ENCODE measurements at regions of chr22 and their contacts with region 1.

Region 1: GRCh38 chr22:49930739-49931412 is 12.4 kb downstream of the CRELD2 start:
- DNase-seq: peak; percentile 53
- ATAC-seq: peak; percentile 46
- H3K4me3 Mint-ChIP-seq: peak overlapping the region; percentile 55
- H3K27ac Mint-ChIP-seq: peak overlapping the region; percentile 79
- H3K4me1 Mint-ChIP-seq: peaks cover 56% of the 10 kb centered on the region
- H3K27me3 Mint-ChIP-seq: no peaks in the 10 kb centered on the region
- CTCF ChIP-seq: peak; percentile 21

Region 2: GRCh38 chr22:49657275-49657975 is 273.5 kb before region 1 on chr22:
- CTCF ChIA-PET with region 1: no interaction called
- POLR2A ChIA-PET with region 1: no interaction called
- intact Hi-C with region 1: loop called (anchors 10 kb)
- DNase-seq: peak; percentile 63
- ATAC-seq: peak; percentile 80
- H3K4me3 Mint-ChIP-seq: peak overlapping the region; percentile 96
- H3K27ac Mint-ChIP-seq: peak overlapping the region; percentile 90
- H3K4me1 Mint-ChIP-seq: peaks cover 47% of the 10 kb centered on the region
- H3K27me3 Mint-ChIP-seq: no peaks in the 10 kb centered on the region
- CTCF ChIP-seq: no peak

Region 3: DNA sequence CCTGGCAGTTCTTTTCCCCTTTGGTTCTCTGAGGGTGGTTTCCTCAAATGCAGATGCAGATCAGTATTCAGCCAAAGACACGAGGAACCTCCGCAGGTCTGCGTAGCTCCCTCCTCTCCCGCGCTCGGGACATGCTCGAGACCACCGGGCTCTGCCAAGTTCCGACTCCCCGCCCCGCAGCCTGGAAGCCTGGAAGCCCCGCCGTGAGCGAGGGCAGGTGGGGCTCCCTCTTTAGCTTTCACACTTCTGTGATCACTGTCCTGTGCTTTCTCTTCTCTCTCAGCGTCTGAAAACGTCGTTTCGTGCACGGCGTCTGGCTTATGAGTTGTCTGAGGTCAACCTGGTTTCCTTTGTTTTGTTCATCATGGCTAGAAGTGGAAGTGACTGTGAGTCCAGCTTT is 50.6 kb before region 1 on chr22:
- CTCF ChIA-PET with region 1: no interaction called
- POLR2A ChIA-PET with region 1: no interaction called
- intact Hi-C with region 1: no loop called
- DNase-seq: no peak
- ATAC-seq: no peak
- H3K4me3 Mint-ChIP-seq: no peak overlapping the region
- H3K27ac Mint-ChIP-seq: no peak overlapping the region
- H3K4me1 Mint-ChIP-seq: peaks cover 16% of the 10 kb centered on the region
- H3K27me3 Mint-ChIP-seq: no peaks in the 10 kb centered on the region
- CTCF ChIP-seq: no peak

Region 4: DNA sequence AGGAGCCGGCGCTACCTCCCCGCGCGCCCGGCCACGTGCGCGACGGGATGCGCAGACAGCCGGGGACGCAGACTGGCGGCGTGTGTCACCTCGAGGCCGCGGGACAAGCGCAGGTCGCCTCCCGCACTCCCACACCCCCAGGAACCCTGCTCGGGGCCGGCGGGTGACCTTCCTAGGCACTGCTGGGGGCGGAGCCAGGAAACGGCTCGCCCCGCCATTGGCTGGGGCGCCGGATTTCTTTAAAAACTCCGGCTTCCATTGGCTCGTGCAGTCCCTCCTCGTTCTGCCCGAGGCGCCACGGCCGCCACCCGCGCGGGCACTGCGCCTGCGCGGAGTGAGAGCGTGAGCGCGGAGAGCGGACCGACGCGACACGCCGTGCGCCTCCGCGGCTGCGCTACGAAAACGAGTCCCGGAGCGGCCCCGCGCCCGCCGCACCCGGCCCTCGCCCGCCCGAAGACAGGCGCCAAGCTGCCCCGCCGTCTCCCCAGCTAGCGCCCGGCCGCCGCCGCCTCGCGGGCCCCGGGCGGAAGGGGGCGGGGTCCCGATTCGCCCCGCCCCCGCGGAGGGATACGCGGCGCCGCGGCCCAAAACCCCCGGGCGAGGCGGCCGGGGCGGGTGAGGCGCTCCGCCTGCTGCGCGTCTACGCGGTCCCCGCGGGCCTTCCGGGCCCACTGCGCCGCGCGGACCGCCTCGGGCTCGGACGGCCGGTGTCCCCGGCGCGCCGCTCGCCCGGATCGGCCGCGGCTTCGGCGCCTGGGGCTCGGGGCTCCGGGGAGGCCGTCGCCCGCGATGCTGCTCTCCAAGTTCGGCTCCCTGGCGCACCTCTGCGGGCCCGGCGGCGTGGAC is 29.5 kb after region 1 on chr22 and contains the start of gene PIM3:
- CTCF ChIA-PET with region 1: interaction called, 36 read pairs
- POLR2A ChIA-PET with region 1: interaction called, 828 read pairs
- intact Hi-C with region 1: loop called (anchors 1 kb)
- DNase-seq: peak; percentile 89
- ATAC-seq: peak; percentile 79
- H3K4me3 Mint-ChIP-seq: peak within 1 kb of the TSS; percentile 91
- H3K27ac Mint-ChIP-seq: peak within 1 kb of the TSS; percentile 90
- H3K4me1 Mint-ChIP-seq: peaks cover 38% of the 10 kb centered on the region
- H3K27me3 Mint-ChIP-seq: no peaks in the 10 kb centered on the region
- CTCF ChIP-seq: no peak
- total RNA-seq, gene PIM3: 79.8 and 91.7 TPM in 2 replicates

Region 5: GRCh38 chr22:49992921-49993648 is 62.2 kb after region 1 on chr22:
- CTCF ChIA-PET with region 1: interaction called, 62 read pairs
- POLR2A ChIA-PET with region 1: interaction called, 41 read pairs
- intact Hi-C with region 1: loop called (anchors 1 kb)
- DNase-seq: peak; percentile 61
- ATAC-seq: peak; percentile 98
- H3K4me3 Mint-ChIP-seq: peak overlapping the region; percentile 41
- H3K27ac Mint-ChIP-seq: peak overlapping the region; percentile 54
- H3K4me1 Mint-ChIP-seq: peaks cover 13% of the 10 kb centered on the region
- H3K27me3 Mint-ChIP-seq: no peaks in the 10 kb centered on the region
- CTCF ChIP-seq: no peak

Region 6: GRCh38 chr22:50030297-50031188 is 99.7 kb after region 1 on chr22:
- CTCF ChIA-PET with region 1: interaction called, 91 read pairs
- POLR2A ChIA-PET with region 1: interaction called, 35 read pairs
- intact Hi-C with region 1: loop called (anchors 1 kb)
- DNase-seq: peak; percentile 77
- ATAC-seq: peak; percentile 97
- H3K4me3 Mint-ChIP-seq: no peak overlapping the region
- H3K27ac Mint-ChIP-seq: no peak overlapping the region
- H3K4me1 Mint-ChIP-seq: peaks cover 7% of the 10 kb centered on the region
- H3K27me3 Mint-ChIP-seq: peaks cover 8% of the 10 kb centered on the region
- CTCF ChIP-seq: peak; percentile 75

Region 7: GRCh38 chr22:50209893-50210292 is 279.0 kb after region 1 on chr22:
- CTCF ChIA-PET with region 1: interaction called, 6 read pairs
- POLR2A ChIA-PET with region 1: no interaction called
- intact Hi-C with region 1: loop called (anchors 1 kb)
- DNase-seq: peak; percentile 60
- ATAC-seq: peak; percentile 54
- H3K4me3 Mint-ChIP-seq: no peak overlapping the region
- H3K27ac Mint-ChIP-seq: peak overlapping the region; percentile 35
- H3K4me1 Mint-ChIP-seq: peaks cover 27% of the 10 kb centered on the region
- H3K27me3 Mint-ChIP-seq: no peaks in the 10 kb centered on the region
- CTCF ChIP-seq: no peak

Region 8: GRCh38 chr22:50326959-50327710 is 396.3 kb after region 1 on chr22 and contains the start of gene DENND6B:
- CTCF ChIA-PET with region 1: no interaction called
- POLR2A ChIA-PET with region 1: no interaction called
- intact Hi-C with region 1: no loop called
- DNase-seq: peak; percentile 82
- ATAC-seq: peak; percentile 92
- H3K4me3 Mint-ChIP-seq: peak within 1 kb of the TSS; percentile 86
- H3K27ac Mint-ChIP-seq: peak within 1 kb of the TSS; percentile 76
- H3K4me1 Mint-ChIP-seq: peaks cover 20% of the 10 kb centered on the region
- H3K27me3 Mint-ChIP-seq: peaks cover 3% of the 10 kb centered on the region
- CTCF ChIP-seq: no peak
- total RNA-seq, gene DENND6B: 3.2 and 5.2 TPM in 2 replicates

Region 9: GRCh38 chr22:50525390-50526068 is 594.7 kb after region 1 on chr22 and contains the start of gene SCO2:
- CTCF ChIA-PET with region 1: interaction called, 3 read pairs
- POLR2A ChIA-PET with region 1: interaction called, 3 read pairs
- intact Hi-C with region 1: loop called (anchors 5 kb)
- DNase-seq: peak; percentile 97
- ATAC-seq: peak; percentile 52
- H3K4me3 Mint-ChIP-seq: peak within 1 kb of the TSS; percentile 84
- H3K27ac Mint-ChIP-seq: peak within 1 kb of the TSS; percentile 90
- H3K4me1 Mint-ChIP-seq: peaks cover 33% of the 10 kb centered on the region
- H3K27me3 Mint-ChIP-seq: no peaks in the 10 kb centered on the region
- CTCF ChIP-seq: no peak
- total RNA-seq, gene SCO2: 7.1 and 11.6 TPM in 2 replicates

Measured in activated B cell treated with CpG ODN at 0.5 μM for 24 hours (primary cell).